ENCODE measurements at regions of chr6 and their contacts with region 1.

Region 1: GRCh38 chr6:166775180-166776081 is 148.4 kb upstream of the RPS6KA2 start:
- ATAC-seq: peak; percentile 32 to 81 (median 41)
- H3K4me3 ChIP-seq: no peak overlapping the region
- H3K27ac ChIP-seq: no peak overlapping the region
- H3K4me1 ChIP-seq: no peaks in the 10 kb centered on the region

Region 2: DNA sequence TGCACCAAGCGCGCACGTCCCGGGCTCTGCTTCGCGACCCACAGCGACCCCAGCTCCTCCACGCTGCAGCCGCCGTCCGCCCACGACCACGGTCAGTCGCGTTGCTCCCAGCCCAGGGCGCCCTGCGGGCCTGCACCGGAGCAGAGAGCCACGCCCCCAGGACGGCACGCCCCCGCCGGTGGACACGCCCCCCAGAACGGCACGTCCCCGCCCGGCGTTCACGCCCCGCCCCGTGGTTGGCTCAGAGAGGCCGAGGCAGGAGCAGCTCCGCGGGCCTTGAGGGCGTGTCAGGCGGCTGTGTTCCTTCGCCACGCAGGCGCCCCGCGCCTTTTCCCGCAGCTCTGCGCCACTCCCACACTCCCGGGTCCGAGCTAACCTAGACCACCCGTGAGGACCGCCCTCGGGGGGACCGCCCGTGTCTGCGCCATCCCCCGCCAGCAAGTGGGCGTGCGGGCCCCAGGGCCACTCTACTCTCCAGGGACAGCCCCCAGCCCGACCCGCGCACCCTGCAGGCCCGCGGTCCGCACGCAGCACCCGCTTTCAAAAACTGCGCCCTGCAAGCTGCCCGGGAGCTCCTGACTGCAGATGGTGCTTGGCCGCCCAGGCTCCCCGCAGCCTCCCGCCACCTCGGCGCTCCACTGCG is 181.1 kb after region 1 on chr6 and contains the start of gene RNASET2:
- in situ Hi-C with region 1: loop called in 1 of 9 experiments (anchors 25 kb)
- ATAC-seq: peak; percentile 81 to 94 (median 88)
- H3K4me3 ChIP-seq: peak within 1 kb of the TSS; percentile 46 to 97 (median 50)
- H3K27ac ChIP-seq: peak within 1 kb of the TSS; percentile 4 to 69
- H3K4me1 ChIP-seq: peaks cover 12 to 26% of the 10 kb centered on the region in 2 donors
- total RNA-seq, gene RNASET2: 12.9 to 55.2 (median 17.3) TPM

Region 3: DNA sequence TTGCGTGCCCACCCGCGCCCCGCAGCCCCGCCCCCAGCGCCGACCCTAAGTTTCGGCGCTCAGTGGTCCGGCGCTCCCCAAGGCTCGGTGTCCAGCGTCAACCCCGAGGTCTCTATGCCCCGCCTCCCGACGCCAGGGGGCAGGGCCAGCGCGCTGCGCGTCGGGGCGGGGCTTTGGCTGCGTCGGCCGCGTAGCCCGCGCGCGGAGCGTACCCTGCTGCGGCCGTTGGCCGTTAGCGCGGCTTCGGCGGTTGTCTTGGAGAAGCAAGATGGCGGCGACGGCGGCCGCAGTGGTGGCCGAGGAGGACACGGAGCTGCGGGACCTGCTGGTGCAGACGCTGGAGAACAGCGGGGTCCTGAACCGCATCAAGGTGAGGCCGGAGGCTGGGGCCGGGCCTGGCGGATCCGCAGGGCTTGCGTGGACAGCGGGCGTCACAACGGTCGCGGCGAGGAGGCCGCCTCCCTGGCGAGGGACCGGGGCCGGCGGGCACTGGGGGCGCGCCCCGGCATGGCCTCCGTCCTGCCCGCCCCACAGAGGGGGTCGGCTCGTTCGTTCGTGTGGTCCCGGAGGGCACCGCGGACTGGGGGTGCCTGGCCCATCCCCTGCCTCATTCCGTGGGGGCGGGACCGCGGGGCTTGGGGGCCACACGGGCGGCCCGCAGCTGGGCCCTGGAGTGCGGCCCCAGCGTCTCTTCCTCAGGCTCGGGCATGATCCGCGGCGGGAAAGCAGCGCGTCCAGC is 223.9 kb after region 1 on chr6 and contains the start of gene CEP43:
- in situ Hi-C with region 1: loop called in 4 of 9 experiments (anchors 10 to 25 kb)
- ATAC-seq: peak; percentile 87 to 97 (median 96)
- H3K4me3 ChIP-seq: peak within 1 kb of the TSS; percentile 69 to 92 (median 77)
- H3K27ac ChIP-seq: peak within 1 kb of the TSS; percentile 76 to 95
- H3K4me1 ChIP-seq: peaks cover 11 to 16% of the 10 kb centered on the region in 2 donors
- total RNA-seq, gene CEP43: 9.3 to 28.4 (median 21.1) TPM

Region 4: GRCh38 chr6:167141667-167142432 is 366.4 kb after region 1 on chr6:
- in situ Hi-C with region 1: loop called in 4 of 9 experiments (anchors 25 kb)
- ATAC-seq: peak; percentile 58 to 83 (median 75)
- H3K4me3 ChIP-seq: no peak overlapping the region
- H3K27ac ChIP-seq: no peak overlapping the region
- H3K4me1 ChIP-seq: peaks cover 17 to 22% of the 10 kb centered on the region in 2 donors

Region 5: DNA sequence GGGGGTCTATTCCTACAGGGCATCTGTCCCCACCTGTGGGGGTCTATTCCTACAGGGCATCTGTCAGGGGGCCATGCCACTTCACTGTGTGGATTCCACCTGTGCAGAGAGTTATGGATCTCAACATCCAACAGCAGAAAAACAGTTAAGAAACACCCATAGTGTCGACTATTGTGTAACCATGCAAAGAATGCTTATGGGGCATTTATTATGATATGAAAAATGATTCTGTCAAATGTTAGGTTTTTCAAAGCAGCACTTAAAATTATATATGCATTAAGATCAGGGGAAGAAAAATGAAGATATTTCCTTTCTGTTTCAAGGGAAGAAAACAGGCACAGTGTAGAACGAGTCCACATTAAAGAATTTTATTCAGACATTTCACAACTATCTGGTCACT is 379.5 kb after region 1 on chr6:
- in situ Hi-C with region 1: no loop called
- ATAC-seq: no peak
- H3K4me3 ChIP-seq: no peak overlapping the region
- H3K27ac ChIP-seq: no peak overlapping the region
- H3K4me1 ChIP-seq: no peaks in the 10 kb centered on the region

Measured in motor neuron (in vitro differentiated cells).